Naive thymus-derived CD4-positive, alpha-beta T cell (primary cell): ENCODE measurements at regions of chr2 and their contacts with region 1.

Region 1: GRCh38 chr2:109128048-109128465 is 948 bp upstream of the SH3RF3 start:
- DNase-seq: peak; percentile 49 to 76 (median 70)
- ATAC-seq: peak; percentile 80
- H3K4me3 ChIP-seq: peak overlapping the region; percentile 64
- H3K4me3 Mint-ChIP-seq: peak overlapping the region; percentile 81 to 100 (median 87)
- H3K27ac ChIP-seq: peak overlapping the region; percentile 67
- H3K27ac Mint-ChIP-seq: peak overlapping the region in 8 of 9 donors; percentile 64 to 93 (median 80)
- H3K4me1 ChIP-seq: peaks cover 0 to 16% of the 10 kb centered on the region in 2 donors
- H3K4me1 Mint-ChIP-seq: peaks cover 24 to 68% (median 55%) of the 10 kb centered on the region in 7 donors
- H3K27me3 ChIP-seq: no peaks in the 10 kb centered on the region
- H3K27me3 Mint-ChIP-seq: peaks cover 0 to 54% (median 0%) of the 10 kb centered on the region in 5 donors

Region 2: DNA sequence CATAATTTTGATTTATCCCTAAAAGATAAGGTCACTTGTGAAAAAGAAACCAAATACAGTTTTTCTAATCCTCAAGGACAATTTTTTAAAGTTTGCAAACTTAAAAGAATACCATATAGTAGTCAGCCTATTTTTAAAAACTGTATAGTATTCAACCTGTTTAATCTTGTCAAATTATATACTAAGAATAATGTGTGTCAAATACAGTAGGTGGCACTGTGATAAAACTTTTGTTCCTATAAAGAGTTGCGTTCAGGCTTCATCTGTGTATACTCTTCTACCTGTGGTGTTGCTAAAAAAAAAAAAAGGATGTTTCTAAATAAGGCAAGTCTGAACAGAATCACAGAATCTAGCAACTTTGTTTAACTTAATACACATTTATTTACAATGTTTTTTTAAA is 272.9 kb before region 1 on chr2:
- CTCF ChIA-PET with region 1: no interaction called
- POLR2A ChIA-PET with region 1: interaction called, 8 read pairs
- intact Hi-C with region 1: loop called in 1 of 2 experiments (anchors 1 kb)
- DNase-seq: peak in 6 of 9 donors; percentile 27 to 66 (median 54)
- ATAC-seq: peak; percentile 85
- H3K4me3 ChIP-seq: no peak overlapping the region
- H3K4me3 Mint-ChIP-seq: no peak overlapping the region
- H3K27ac ChIP-seq: no peak overlapping the region
- H3K27ac Mint-ChIP-seq: no peak overlapping the region
- H3K4me1 ChIP-seq: no peaks in the 10 kb centered on the region
- H3K4me1 Mint-ChIP-seq: peaks cover 0 to 8% (median 4%) of the 10 kb centered on the region in 7 donors
- H3K27me3 ChIP-seq: no peaks in the 10 kb centered on the region
- H3K27me3 Mint-ChIP-seq: no peaks in the 10 kb centered on the region

Region 3: DNA sequence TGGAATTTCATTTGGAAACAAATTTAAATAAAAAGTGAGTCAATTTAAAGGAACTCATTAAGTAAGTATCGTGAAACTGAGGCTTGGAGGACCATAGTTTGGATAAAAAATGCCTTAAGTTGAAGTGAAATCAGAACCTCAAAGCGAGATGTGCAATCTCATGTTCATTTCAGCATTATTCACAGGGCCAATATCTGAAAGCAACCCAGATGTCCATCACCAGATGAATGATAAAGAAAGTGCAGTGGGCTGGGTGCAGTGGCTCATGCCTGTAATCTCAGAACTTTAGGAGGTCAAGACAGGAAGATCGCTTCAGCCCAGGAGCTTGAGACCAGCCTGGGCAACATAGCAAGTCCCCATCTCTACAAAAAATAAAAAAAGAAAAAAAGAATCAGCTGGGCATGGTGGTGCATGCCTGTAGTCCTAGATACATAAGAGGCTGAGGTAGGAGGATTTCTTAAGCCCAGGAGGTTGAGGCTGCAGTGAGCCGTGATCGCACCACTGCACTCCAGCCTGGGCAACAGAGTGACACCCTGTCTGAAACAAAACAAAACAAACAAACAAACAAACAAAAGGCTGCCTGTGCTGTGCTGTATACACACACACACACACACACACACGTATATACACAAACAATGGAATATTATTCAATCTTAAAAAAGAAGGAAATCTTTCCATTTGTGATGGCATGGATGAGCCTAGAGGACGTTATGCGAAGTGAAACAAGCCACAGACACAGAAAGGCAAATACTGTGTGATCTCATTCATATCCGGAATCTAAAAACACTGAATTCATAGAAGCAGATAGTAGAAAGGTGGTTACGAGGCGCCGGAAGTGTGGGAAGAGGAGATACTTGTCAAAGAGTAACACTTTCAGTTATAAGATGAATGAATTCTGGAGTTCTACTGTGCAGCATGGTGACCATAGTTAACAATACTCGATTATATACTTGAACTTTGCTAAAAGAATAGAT is 15.4 kb after region 1 on chr2:
- CTCF ChIA-PET with region 1: interaction called, 9 read pairs
- POLR2A ChIA-PET with region 1: interaction called, 5 read pairs
- intact Hi-C with region 1: loop called (anchors 1 to 2 kb)
- DNase-seq: peak in 8 of 9 donors; percentile 60 to 82 (median 76)
- ATAC-seq: peak; percentile 86
- H3K4me3 ChIP-seq: peak overlapping the region; percentile 4
- H3K4me3 Mint-ChIP-seq: peak overlapping the region; percentile 39 to 80 (median 70)
- H3K27ac ChIP-seq: peak overlapping the region; percentile 37
- H3K27ac Mint-ChIP-seq: peak overlapping the region; percentile 6 to 92 (median 84)
- H3K4me1 ChIP-seq: peaks cover 13 to 23% of the 10 kb centered on the region in 2 donors
- H3K4me1 Mint-ChIP-seq: peaks cover 20 to 62% (median 51%) of the 10 kb centered on the region in 7 donors
- H3K27me3 ChIP-seq: no peaks in the 10 kb centered on the region
- H3K27me3 Mint-ChIP-seq: peaks cover 0 to 52% (median 0%) of the 10 kb centered on the region in 5 donors

Region 4: DNA sequence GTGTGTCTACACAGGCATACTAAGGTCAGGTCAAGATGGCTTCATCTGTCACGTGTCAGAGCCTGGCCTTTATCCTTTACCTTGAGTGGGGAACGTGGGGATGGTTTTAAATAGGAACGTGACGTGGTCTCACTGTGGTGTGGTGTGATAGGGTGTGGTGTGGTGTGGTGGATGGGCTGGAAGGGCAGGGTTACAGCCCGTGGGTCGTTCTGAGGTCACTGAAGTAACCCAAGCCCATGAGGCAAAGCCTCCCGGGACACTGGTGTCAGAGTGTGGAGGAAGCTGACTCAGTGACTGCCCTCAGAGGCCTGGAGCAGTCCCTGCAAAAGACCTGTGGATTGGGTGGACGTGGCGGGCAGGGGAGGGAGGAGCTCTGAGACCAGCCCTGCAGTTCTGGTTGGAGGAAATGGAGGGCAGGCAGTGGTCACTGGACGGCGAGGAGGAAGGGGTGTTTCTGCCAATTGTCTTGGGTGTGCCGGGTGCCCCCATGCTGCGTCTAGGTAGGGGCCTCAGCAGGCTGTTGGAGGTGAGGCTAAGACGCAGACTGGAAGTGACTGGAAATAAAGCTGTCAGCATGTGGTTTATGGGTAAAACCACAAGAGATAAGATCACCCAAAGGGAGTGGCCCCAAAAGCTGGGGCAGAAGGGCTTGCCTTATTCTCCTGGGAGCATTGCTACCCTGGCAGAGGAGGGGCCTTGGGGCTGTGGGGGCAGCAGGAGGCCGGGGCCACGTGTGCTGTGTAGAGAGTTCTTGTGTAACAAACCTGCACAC is 85.8 kb after region 1 on chr2:
- CTCF ChIA-PET with region 1: no interaction called
- POLR2A ChIA-PET with region 1: interaction called, 3 read pairs
- intact Hi-C with region 1: loop called (anchors 1 kb)
- DNase-seq: peak; percentile 39 to 87 (median 81)
- ATAC-seq: peak; percentile 82
- H3K4me3 ChIP-seq: no peak overlapping the region
- H3K4me3 Mint-ChIP-seq: peak overlapping the region; percentile 56 to 83 (median 78)
- H3K27ac ChIP-seq: no peak overlapping the region
- H3K27ac Mint-ChIP-seq: peak overlapping the region; percentile 54 to 95 (median 77)
- H3K4me1 ChIP-seq: peaks cover 44 to 56% of the 10 kb centered on the region in 2 donors
- H3K4me1 Mint-ChIP-seq: peaks cover 60 to 79% (median 72%) of the 10 kb centered on the region in 7 donors
- H3K27me3 ChIP-seq: peaks cover 16 to 23% of the 10 kb centered on the region in 2 donors
- H3K27me3 Mint-ChIP-seq: peaks cover 58 to 74% (median 61%) of the 10 kb centered on the region in 5 donors

Region 5: DNA sequence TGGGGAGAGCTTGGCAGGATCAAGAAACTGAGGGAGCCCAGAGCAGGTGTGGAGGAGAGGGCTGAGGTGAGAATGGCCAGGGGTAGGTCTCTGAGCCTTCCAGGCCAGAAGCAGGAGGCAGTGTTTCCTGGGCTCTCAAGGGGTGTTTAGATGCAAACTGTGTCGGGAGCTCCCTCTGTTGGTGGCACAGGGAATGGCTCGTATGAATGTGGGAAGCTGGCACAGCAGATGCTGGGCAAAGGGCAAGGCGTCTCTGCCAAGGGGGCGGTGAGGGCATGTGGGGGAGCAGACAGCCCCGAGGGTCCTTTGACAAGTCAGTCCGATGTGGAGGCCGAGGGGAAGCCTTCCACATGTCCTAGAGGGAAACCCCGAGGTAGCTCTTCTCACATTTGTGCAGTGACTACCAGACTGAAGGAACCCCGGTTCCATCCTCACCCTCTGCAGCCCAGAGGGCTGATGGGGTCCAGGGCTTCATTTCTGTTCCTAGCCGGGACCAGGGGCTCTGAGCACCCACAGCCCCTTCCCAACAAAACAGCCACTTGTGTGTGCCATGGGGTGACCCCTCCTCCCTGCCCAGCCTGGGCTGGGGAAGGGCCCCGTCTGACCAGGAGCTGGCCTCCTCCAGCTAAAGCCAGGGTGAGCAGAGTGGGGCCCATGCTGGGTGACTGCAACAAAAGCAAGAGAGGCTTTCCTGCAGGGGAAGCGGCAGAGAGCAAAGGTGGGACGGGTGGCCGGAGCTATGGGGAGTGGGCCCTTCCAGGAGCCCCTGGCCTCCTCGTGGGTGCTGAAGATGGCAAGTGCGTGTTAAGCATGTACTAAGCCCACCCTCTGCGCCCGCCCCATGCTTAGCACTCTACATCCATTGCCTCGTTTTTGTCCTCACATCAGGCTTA is 382.3 kb after region 1 on chr2:
- CTCF ChIA-PET with region 1: interaction called, 31 read pairs
- POLR2A ChIA-PET with region 1: interaction called, 3 read pairs
- intact Hi-C with region 1: loop called (anchors 1 kb)
- DNase-seq: peak; percentile 56 to 83 (median 74)
- ATAC-seq: peak; percentile 80
- H3K4me3 ChIP-seq: no peak overlapping the region
- H3K4me3 Mint-ChIP-seq: no peak overlapping the region
- H3K27ac ChIP-seq: no peak overlapping the region
- H3K27ac Mint-ChIP-seq: peak overlapping the region in 4 of 9 donors; percentile 22 to 46 (median 44)
- H3K4me1 ChIP-seq: peaks cover 0 to 2% of the 10 kb centered on the region in 2 donors
- H3K4me1 Mint-ChIP-seq: peaks cover 0 to 7% (median 4%) of the 10 kb centered on the region in 7 donors
- H3K27me3 ChIP-seq: no peaks in the 10 kb centered on the region
- H3K27me3 Mint-ChIP-seq: no peaks in the 10 kb centered on the region